Activated CD8-positive, alpha-beta T cell treated with anti-CD3 and anti-CD28 coated beads for 36 hours (primary cell): ENCODE measurements at regions of chr1 and their contacts with region 1.

Region 1: DNA sequence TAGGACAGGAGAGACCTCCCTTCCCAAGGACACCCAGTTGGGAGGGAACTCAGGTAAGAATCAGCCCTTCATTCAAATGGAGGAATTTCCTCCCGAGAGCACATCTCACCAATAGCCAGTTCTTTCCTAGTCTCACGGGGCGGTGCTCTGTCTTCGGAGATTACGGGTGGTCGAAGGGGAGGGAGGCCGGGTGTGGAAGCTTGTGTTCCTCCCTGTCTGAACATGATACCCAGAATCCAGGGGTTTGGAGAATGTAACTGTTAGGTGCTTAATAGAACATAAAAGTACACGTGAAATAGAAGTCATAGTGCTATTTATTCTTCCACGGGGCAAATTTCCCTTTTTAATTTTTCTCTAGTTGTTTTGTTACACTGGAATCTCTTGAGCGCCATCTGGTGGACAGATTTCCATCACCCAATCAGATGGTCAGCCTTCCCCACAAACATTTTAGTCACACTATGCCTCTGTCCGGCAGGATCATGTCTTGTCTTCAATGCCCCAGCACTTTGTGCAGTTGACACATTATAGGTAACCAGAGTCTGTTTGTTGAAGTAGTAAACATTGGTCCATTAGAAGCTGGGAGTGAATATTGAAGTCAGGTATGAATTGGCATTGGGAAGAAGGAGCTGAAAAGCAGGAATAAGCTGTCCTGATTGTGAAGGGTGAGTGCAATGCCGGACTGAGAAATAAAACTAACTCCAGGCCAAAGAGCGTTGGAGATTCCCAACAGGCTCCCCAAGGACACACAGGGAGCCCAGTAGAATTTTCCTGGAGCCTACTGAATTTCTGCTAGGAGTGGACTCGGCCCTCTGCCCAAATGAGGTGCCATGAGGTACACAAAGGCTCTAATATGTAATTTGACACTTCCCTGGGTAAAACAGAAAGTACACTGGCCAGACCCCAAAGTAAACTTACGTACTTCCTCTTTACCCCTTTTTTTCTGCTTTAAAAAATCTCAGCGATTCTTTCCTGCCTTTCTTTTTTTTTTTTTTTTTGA is 27.6 kb upstream of the ZNF697 start:
- DNase-seq: peak; percentile 89
- ATAC-seq: peak; percentile 72
- H3K4me3 Mint-ChIP-seq: peak overlapping the region; percentile 52
- H3K27ac Mint-ChIP-seq: no peak overlapping the region
- H3K4me1 Mint-ChIP-seq: peaks cover 4% of the 10 kb centered on the region
- H3K27me3 Mint-ChIP-seq: peaks cover 4% of the 10 kb centered on the region
- CTCF ChIP-seq: peak; percentile 78

Region 2: GRCh38 chr1:119554183-119554582 is 121.5 kb before region 1 on chr1:
- CTCF ChIA-PET with region 1: no interaction called
- POLR2A ChIA-PET with region 1: no interaction called
- intact Hi-C with region 1: no loop called
- DNase-seq: no peak
- ATAC-seq: no peak
- H3K4me3 Mint-ChIP-seq: no peak overlapping the region
- H3K27ac Mint-ChIP-seq: no peak overlapping the region
- H3K4me1 Mint-ChIP-seq: no peaks in the 10 kb centered on the region
- H3K27me3 Mint-ChIP-seq: no peaks in the 10 kb centered on the region
- CTCF ChIP-seq: no peak

Region 3: DNA sequence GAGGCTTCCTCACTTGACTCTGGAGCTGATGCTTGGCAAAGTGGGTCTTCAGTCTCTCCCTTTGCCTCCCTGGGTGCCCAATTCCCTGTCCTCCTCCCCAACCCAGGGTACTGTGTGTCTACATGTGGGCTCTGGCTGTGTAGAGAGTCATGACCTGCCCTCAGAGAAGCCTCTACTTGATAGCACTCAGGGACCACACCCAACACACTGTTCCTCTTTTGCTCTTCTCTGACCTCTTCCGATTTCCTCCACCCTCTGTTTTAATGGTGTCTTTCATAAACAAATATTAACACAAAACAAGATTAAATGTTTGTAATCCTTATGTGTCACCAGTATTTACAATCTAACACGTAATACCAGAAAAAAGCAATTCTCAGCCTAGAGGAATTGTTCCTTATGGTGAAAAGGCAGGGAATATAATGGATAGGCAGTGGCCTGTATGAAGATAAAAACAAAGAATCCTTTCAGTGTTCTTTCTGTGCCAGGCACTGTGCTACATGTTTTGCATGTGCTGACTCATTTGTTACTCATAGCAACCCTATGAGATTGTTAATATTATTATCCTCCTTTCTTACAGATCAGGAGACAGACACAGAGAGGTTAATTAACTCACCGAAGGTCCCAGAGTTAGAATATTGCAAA is 110.4 kb before region 1 on chr1:
- CTCF ChIA-PET with region 1: no interaction called
- POLR2A ChIA-PET with region 1: no interaction called
- intact Hi-C with region 1: no loop called
- DNase-seq: no peak
- ATAC-seq: no peak
- H3K4me3 Mint-ChIP-seq: no peak overlapping the region
- H3K27ac Mint-ChIP-seq: no peak overlapping the region
- H3K4me1 Mint-ChIP-seq: no peaks in the 10 kb centered on the region
- H3K27me3 Mint-ChIP-seq: peaks cover 11% of the 10 kb centered on the region
- CTCF ChIP-seq: no peak

Region 4: GRCh38 chr1:119613769-119614720 is 61.6 kb before region 1 on chr1:
- CTCF ChIA-PET with region 1: interaction called, 250 read pairs
- POLR2A ChIA-PET with region 1: no interaction called
- intact Hi-C with region 1: loop called (anchors 5 kb)
- DNase-seq: peak; percentile 82
- ATAC-seq: peak; percentile 79
- H3K4me3 Mint-ChIP-seq: no peak overlapping the region
- H3K27ac Mint-ChIP-seq: no peak overlapping the region
- H3K4me1 Mint-ChIP-seq: no peaks in the 10 kb centered on the region
- H3K27me3 Mint-ChIP-seq: peaks cover 2% of the 10 kb centered on the region
- CTCF ChIP-seq: peak; percentile 75

Region 5: DNA sequence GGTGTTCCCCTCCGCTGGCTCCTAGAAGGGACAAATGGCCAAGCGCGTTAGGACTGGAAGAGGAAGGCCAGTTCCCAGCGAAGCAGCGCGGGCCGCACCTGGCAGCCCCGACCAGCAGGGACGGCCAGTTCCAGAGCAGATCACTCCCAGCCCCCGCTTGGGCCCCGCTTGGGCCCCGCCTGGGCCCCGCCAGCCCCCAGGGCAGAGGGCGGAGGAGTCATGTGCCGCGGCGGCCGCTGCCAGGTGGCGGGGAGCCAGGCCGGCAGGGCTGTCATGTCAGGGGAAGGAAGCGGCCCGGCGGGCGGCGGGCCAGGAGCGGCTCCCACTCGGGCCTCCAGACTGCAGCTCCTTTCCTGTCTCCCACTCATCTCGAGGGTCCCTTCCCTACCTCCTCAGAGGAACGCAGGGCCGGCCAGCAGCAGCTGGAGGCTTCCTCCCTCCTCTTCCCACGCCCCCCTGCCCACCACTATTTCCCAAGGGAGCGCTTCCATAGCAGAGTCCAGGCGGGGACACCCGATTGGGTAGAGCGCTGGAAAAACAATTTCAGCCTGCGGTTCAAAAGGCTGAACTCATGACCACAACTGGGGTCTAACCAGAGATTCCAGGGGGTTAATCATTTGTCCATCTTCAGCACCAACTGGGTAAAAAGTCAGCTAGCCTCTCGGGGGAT is 44.1 kb before region 1 on chr1:
- CTCF ChIA-PET with region 1: interaction called, 26 read pairs
- POLR2A ChIA-PET with region 1: no interaction called
- intact Hi-C with region 1: no loop called
- DNase-seq: no peak
- ATAC-seq: no peak
- H3K4me3 Mint-ChIP-seq: no peak overlapping the region
- H3K27ac Mint-ChIP-seq: no peak overlapping the region
- H3K4me1 Mint-ChIP-seq: no peaks in the 10 kb centered on the region
- H3K27me3 Mint-ChIP-seq: peaks cover 56% of the 10 kb centered on the region
- CTCF ChIP-seq: no peak

Region 6: GRCh38 chr1:119653839-119654170 is 21.8 kb before region 1 on chr1:
- CTCF ChIA-PET with region 1: interaction called, 23 read pairs
- POLR2A ChIA-PET with region 1: no interaction called
- intact Hi-C with region 1: no loop called
- DNase-seq: no peak
- ATAC-seq: no peak
- H3K4me3 Mint-ChIP-seq: no peak overlapping the region
- H3K27ac Mint-ChIP-seq: no peak overlapping the region
- H3K4me1 Mint-ChIP-seq: no peaks in the 10 kb centered on the region
- H3K27me3 Mint-ChIP-seq: peaks cover 40% of the 10 kb centered on the region
- CTCF ChIP-seq: no peak

Region 7: GRCh38 chr1:119686649-119687048 is 11.0 kb after region 1 on chr1:
- CTCF ChIA-PET with region 1: interaction called, 66 read pairs
- POLR2A ChIA-PET with region 1: no interaction called
- intact Hi-C with region 1: no loop called
- DNase-seq: no peak
- ATAC-seq: no peak
- H3K4me3 Mint-ChIP-seq: no peak overlapping the region
- H3K27ac Mint-ChIP-seq: no peak overlapping the region
- H3K4me1 Mint-ChIP-seq: no peaks in the 10 kb centered on the region
- H3K27me3 Mint-ChIP-seq: no peaks in the 10 kb centered on the region
- CTCF ChIP-seq: no peak